Aorta (tissue), 5 donors: ENCODE measurements at regions of chr1 and their contacts with region 1.

Region 1: DNA sequence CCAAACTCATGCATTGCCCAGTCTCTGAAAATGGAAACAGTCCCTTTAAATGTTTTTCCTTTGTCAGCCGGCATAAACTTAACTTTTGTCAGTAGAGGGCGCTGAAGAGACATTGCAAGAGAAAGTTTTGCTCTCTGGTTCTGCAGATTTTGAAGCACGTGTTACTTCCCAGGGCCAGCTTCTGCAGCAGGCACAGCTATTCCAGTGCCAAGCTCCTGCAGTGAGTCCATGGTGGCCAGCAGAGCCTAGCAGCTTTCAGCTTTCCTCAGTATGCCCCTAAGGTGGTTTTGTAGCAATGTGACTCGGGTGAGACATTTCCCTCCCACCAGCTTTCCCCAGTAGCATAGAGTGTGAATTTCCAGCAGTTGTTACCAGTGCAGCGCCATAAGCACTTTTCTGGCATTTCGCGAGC is 2.6 kb upstream of the IFI44L start:
- DNase-seq: peak; percentile 76 to 78
- ATAC-seq: peak; percentile 91
- H3K4me3 ChIP-seq: no peak overlapping the region
- H3K27ac ChIP-seq: no peak overlapping the region
- H3K4me1 ChIP-seq: no peaks in the 10 kb centered on the region
- H3K27me3 ChIP-seq: no peaks in the 10 kb centered on the region

Region 2: GRCh38 chr1:78676347-78676982 is 58.8 kb after region 1 on chr1:
- intact Hi-C with region 1: loop called (anchors 2 kb)
- DNase-seq: no peak
- ATAC-seq: peak; percentile 80
- H3K4me3 ChIP-seq: no peak overlapping the region
- H3K27ac ChIP-seq: no peak overlapping the region
- H3K4me1 ChIP-seq: no peaks in the 10 kb centered on the region
- H3K27me3 ChIP-seq: no peaks in the 10 kb centered on the region